ENCODE measurements at regions of chr11 and their contacts with region 1.

Region 1: GRCh38 chr11:12377824-12378593 is 638 bp downstream of the PARVA start:
- DNase-seq: no peak
- H3K4me3 ChIP-seq: peak overlapping the region; percentile 60 to 87
- H3K27ac ChIP-seq: peak overlapping the region; percentile 93
- H3K4me1 ChIP-seq: peaks cover 32% of the 10 kb centered on the region
- H3K27me3 ChIP-seq: no peaks in the 10 kb centered on the region
- CTCF ChIP-seq: peak in 1 of 3 experiments; percentile 19
- POLR2A ChIP-seq: no peak

Region 2: GRCh38 chr11:12390687-12391110 is 12.7 kb after region 1 on chr11:
- intact Hi-C with region 1: loop called (anchors 2 kb)
- DNase-seq: no peak
- H3K4me3 ChIP-seq: no peak overlapping the region
- H3K27ac ChIP-seq: peak overlapping the region; percentile 8
- H3K4me1 ChIP-seq: peaks cover 59% of the 10 kb centered on the region
- H3K27me3 ChIP-seq: no peaks in the 10 kb centered on the region
- CTCF ChIP-seq: no peak
- POLR2A ChIP-seq: no peak